ENCODE measurements at regions of chr11 and their contacts with region 1.

Region 1: GRCh38 chr11:125592305-125593112 is at the start of gene STT3A:
- DNase-seq: peak; percentile 100
- H3K4me3 ChIP-seq: peak within 1 kb of the TSS; percentile 52 to 99 (median 94)
- H3K27ac ChIP-seq: peak within 1 kb of the TSS; percentile 95 to 98
- H3K4me1 ChIP-seq: peaks cover 0 to 23% (median 17%) of the 10 kb centered on the region in 4 experiments
- H3K27me3 ChIP-seq: no peaks in the 10 kb centered on the region

Region 2: DNA sequence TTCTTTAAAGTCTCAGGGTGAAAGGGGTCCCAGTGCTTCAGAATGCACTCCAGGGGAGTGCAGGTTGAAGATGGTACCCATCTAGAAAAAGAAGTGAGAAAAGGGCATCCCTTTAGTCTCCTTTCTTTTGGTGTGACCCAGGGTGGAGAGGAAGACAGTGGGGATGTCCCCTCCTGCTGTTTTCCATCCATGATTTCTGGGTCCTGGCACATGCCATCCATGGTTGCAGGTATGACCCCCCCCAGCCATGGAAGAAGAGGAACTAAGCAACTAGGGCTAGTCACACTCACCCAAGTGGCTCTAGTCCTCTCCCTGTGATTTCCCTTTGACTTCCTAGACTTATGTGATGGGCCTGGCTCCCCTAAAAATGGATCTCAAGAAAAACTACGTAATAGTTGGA is 39.2 kb before region 1 on chr11:
- CTCF ChIA-PET with region 1: no interaction called
- POLR2A ChIA-PET with region 1: no interaction called
- DNase-seq: peak in 2 of 3 donors; percentile 13
- H3K4me3 ChIP-seq: peak overlapping the region in 1 of 7 experiments; percentile 5
- H3K27ac ChIP-seq: peak overlapping the region in 1 of 2 experiments; percentile 23
- H3K4me1 ChIP-seq: no peaks in the 10 kb centered on the region
- H3K27me3 ChIP-seq: no peaks in the 10 kb centered on the region

Region 3: DNA sequence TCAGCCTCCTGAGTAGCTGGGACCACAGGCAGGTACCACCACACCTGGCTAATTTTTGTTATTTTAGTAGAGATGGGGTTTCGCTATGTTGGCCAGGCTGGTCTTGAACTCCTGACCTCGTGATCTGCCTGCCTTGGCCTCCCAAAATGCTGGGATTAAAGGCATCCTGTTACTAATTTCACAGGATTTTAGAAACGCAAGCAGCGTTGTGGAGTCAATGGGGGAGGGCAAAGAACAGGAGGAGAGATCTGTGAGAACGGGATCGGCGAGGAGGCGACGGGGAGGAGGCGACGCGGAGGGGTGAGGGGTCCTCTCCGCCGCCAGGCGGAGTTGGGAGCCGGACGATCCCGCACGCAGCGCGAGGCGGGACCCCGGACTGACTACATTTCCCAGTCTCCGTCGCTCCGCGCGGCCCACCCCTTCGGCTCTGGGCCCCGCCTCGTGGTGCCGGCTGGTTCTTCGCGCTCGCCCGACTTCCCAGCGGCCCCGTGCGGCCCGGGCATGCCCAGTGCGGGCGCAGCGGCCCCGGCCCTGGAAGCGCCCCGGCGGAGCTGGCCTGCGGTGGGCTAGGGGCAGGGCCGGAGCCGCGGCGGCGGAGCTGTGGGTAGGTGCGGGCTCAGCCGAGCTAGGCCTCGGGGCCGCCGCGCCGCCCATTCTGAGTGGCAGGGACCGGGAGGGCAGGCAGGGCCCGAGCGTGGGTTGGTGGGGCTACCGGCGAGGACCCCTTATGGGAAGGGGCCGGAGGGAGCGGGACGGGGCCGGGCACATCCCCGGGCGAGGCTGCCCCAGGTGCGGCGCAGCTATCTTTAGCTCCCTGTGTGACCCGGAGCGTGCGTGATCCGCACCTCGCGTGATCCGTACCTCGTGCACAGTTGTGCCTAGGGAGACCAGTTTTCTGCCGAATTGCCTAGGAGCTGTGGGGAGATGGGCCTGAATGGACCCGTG is 23.3 kb before region 1 on chr11 and contains the start of gene EI24:
- CTCF ChIA-PET with region 1: interaction called, 22 read pairs
- POLR2A ChIA-PET with region 1: interaction called, 11 read pairs
- DNase-seq: peak; percentile 91 to 93 (median 92)
- H3K4me3 ChIP-seq: peak within 1 kb of the TSS; percentile 57 to 88 (median 74)
- H3K27ac ChIP-seq: peak within 1 kb of the TSS; percentile 58 to 77
- H3K4me1 ChIP-seq: peaks cover 6 to 16% (median 13%) of the 10 kb centered on the region in 4 experiments
- H3K27me3 ChIP-seq: no peaks in the 10 kb centered on the region

Region 4: GRCh38 chr11:125724125-125724524 is 131.6 kb after region 1 on chr11:
- CTCF ChIA-PET with region 1: no interaction called
- POLR2A ChIA-PET with region 1: no interaction called
- DNase-seq: peak in 2 of 3 donors; percentile 1 to 34
- H3K4me3 ChIP-seq: no peak overlapping the region
- H3K27ac ChIP-seq: no peak overlapping the region
- H3K4me1 ChIP-seq: no peaks in the 10 kb centered on the region
- H3K27me3 ChIP-seq: peaks cover 0 to 10% (median 8%) of the 10 kb centered on the region in 5 experiments

Measured in common myeloid progenitor, CD34-positive (primary cell).